B cell (primary cell): ENCODE measurements at regions of chr13 and their contacts with region 1.

Region 1: GRCh38 chr13:44435142-44435982 is 61.7 kb downstream of the SERP2 start:
- DNase-seq: peak; percentile 94
- ATAC-seq: peak; percentile 91
- H3K4me3 ChIP-seq: peak overlapping the region; percentile 52 to 90 (median 71)
- H3K4me3 Mint-ChIP-seq: peak overlapping the region; percentile 89
- H3K27ac ChIP-seq: peak overlapping the region; percentile 69 to 81
- H3K27ac Mint-ChIP-seq: peak overlapping the region; percentile 84
- H3K4me1 ChIP-seq: peaks cover 22 to 30% of the 10 kb centered on the region in 2 donors
- H3K4me1 Mint-ChIP-seq: peaks cover 29% of the 10 kb centered on the region
- H3K27me3 ChIP-seq: peaks cover 0 to 16% (median 0%) of the 10 kb centered on the region in 4 experiments
- H3K27me3 Mint-ChIP-seq: peaks cover 11% of the 10 kb centered on the region
- CTCF ChIP-seq: no peak

Region 2: DNA sequence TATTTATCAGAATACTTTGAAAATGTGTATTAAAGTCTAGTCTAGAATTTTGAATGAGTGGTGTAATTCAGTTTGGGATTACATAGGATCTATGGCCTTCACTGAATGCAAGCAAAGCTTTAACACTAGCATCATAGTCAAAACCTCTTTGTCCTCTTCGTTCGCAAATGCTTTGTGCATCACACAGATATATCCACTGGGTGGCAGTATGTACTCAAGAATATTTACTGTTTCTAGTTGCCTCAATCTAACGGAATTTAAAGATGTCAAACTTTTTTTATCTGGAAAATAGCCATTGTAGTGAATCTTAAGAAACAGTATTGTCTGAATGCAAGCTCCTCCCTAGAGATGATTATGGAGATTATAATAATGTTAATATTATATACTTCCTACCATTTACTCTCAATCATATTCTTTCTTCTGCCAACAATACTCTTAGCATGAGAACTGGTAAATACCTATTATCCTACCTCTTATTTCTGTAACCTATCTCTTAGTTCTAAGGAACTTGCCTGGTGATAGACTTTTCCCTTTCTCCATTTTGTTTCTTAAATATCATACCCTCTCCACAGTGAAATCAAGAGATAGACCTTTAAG is 529.8 kb before region 1 on chr13:
- CTCF ChIA-PET with region 1: interaction called, 260 read pairs
- POLR2A ChIA-PET with region 1: interaction called, 8 read pairs
- intact Hi-C with region 1: loop called (anchors 1 kb)
- DNase-seq: peak; percentile 70
- ATAC-seq: peak; percentile 72
- H3K4me3 ChIP-seq: no peak overlapping the region
- H3K4me3 Mint-ChIP-seq: no peak overlapping the region
- H3K27ac ChIP-seq: no peak overlapping the region
- H3K27ac Mint-ChIP-seq: no peak overlapping the region
- H3K4me1 ChIP-seq: no peaks in the 10 kb centered on the region
- H3K4me1 Mint-ChIP-seq: peaks cover 1% of the 10 kb centered on the region
- H3K27me3 ChIP-seq: no peaks in the 10 kb centered on the region
- H3K27me3 Mint-ChIP-seq: peaks cover 27% of the 10 kb centered on the region
- CTCF ChIP-seq: peak; percentile 90

Region 3: GRCh38 chr13:44141725-44142539 is 293.4 kb before region 1 on chr13:
- CTCF ChIA-PET with region 1: interaction called, 3 read pairs
- POLR2A ChIA-PET with region 1: no interaction called
- intact Hi-C with region 1: loop called (anchors 1 kb)
- DNase-seq: peak; percentile 97
- ATAC-seq: peak; percentile 99
- H3K4me3 ChIP-seq: peak overlapping the region; percentile 69 to 91 (median 81)
- H3K4me3 Mint-ChIP-seq: peak overlapping the region; percentile 96
- H3K27ac ChIP-seq: peak overlapping the region; percentile 77 to 93
- H3K27ac Mint-ChIP-seq: peak overlapping the region; percentile 94
- H3K4me1 ChIP-seq: peaks cover 22 to 26% of the 10 kb centered on the region in 2 donors
- H3K4me1 Mint-ChIP-seq: peaks cover 28% of the 10 kb centered on the region
- H3K27me3 ChIP-seq: no peaks in the 10 kb centered on the region
- H3K27me3 Mint-ChIP-seq: peaks cover 7% of the 10 kb centered on the region
- CTCF ChIP-seq: no peak

Region 4: GRCh38 chr13:44243198-44243857 is 192.0 kb before region 1 on chr13:
- CTCF ChIA-PET with region 1: interaction called, 81 read pairs
- POLR2A ChIA-PET with region 1: interaction called, 4 read pairs
- intact Hi-C with region 1: loop called (anchors 1 kb)
- DNase-seq: peak; percentile 56
- ATAC-seq: peak; percentile 86
- H3K4me3 ChIP-seq: no peak overlapping the region
- H3K4me3 Mint-ChIP-seq: no peak overlapping the region
- H3K27ac ChIP-seq: no peak overlapping the region
- H3K27ac Mint-ChIP-seq: peak overlapping the region; percentile 18
- H3K4me1 ChIP-seq: peaks cover 0 to 5% of the 10 kb centered on the region in 2 donors
- H3K4me1 Mint-ChIP-seq: peaks cover 7% of the 10 kb centered on the region
- H3K27me3 ChIP-seq: peaks cover 0 to 4% (median 0%) of the 10 kb centered on the region in 4 experiments
- H3K27me3 Mint-ChIP-seq: peaks cover 8% of the 10 kb centered on the region
- CTCF ChIP-seq: peak; percentile 60